ENCODE measurements at regions of chr1 and their contacts with region 1.

Region 1: DNA sequence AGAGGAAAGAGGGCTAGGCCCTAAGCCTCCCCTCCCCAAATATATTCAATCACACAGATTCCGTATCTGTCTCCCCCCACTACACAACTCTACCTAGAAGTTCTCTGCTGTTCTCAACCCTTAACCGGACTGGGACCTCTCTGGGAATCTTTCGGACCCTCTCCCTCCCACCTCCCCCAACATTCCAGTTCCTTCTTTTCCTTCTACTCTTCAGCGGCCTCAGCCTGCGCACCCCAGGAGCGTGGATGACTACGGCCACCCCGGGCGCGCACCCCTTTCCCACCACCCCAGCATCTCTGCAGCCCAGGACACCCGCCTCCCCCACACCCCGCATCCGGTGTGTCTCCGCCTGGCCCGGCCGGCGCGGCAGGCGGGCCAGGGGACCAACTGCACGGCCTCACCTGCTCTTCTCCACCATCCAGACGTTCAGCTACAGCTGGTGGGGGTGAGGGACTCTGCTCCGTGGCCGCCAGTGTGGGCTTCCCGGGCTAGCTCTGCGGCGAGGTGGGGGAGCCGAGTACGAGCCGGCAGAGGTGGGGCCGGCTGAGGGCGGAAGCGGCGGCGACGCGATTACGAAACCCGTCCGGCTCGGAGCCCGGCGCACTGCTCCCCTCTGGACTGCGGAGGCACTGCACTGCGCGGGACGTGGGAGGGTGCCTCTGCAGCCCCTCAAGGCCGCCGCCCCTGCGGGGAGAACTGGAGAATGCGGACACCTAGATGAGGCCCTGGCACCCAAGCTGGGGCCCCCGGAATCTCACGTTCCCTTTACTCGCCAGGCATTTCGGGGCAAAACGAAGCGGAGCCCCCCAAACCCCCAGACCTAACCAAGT is at the start of gene CDC42SE1:
- DNase-seq: peak; percentile 80 to 93 (median 89)
- ATAC-seq: peak; percentile 89
- H3K4me3 ChIP-seq: peak within 1 kb of the TSS; percentile 85
- H3K4me1 ChIP-seq: peaks cover 33% of the 10 kb centered on the region
- CTCF ChIP-seq: peak; percentile 90
- total RNA-seq, gene CDC42SE1: 69.2 to 78.5 (median 73.5) TPM

Region 2: GRCh38 chr1:151008190-151008860 is 51.0 kb before region 1 on chr1 and contains the start of gene PRUNE1:
- intact Hi-C with region 1: loop called in 1 of 2 experiments (anchors 10 kb)
- DNase-seq: peak; percentile 97 to 99 (median 97)
- ATAC-seq: peak; percentile 89
- H3K4me3 ChIP-seq: peak within 1 kb of the TSS; percentile 48
- H3K4me1 ChIP-seq: peaks cover 60% of the 10 kb centered on the region
- CTCF ChIP-seq: no peak
- total RNA-seq, gene PRUNE1: 21.3 to 27.5 (median 23.3) TPM

Region 3: GRCh38 chr1:151113877-151114276 is 54.6 kb after region 1 on chr1:
- intact Hi-C with region 1: no loop called
- DNase-seq: no peak
- ATAC-seq: no peak
- H3K4me3 ChIP-seq: no peak overlapping the region
- H3K4me1 ChIP-seq: no peaks in the 10 kb centered on the region
- CTCF ChIP-seq: no peak

Region 4: DNA sequence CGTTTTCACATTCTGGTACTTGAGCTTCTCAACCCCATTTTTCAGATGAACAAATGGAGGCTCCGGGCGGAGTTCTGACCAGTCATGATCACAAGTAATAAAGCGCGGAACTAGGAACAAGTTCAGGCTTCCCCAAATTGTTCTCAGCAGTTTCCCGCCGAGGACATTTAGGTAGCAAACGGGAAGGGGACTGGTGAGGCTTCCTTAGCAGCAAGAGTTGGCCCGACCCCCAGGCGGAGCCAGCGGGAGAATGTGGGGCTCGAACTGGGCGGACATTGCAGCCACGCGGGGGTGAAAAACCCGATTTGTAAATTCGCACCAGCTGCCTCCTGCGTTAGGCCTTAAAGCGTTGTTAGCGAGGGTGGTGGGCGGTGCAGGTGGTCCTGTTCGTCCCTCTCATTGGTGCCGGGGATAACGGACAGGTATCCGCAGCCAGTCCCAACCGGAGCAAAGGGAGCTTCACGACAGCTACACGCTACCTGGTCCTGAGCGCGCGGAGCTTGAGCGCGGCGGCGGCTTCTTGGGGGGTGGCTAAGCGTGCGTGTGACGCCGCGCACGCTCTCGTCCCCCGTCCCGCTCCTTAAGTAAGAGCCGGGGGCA is 71.8 kb after region 1 on chr1:
- intact Hi-C with region 1: no loop called
- DNase-seq: peak; percentile 85 to 87 (median 86)
- ATAC-seq: peak; percentile 93
- H3K4me3 ChIP-seq: no peak overlapping the region
- H3K4me1 ChIP-seq: no peaks in the 10 kb centered on the region
- CTCF ChIP-seq: no peak

Region 5: GRCh38 chr1:151336556-151336955 is 277.3 kb after region 1 on chr1:
- intact Hi-C with region 1: no loop called
- DNase-seq: no peak
- ATAC-seq: no peak
- H3K4me3 ChIP-seq: no peak overlapping the region
- H3K4me1 ChIP-seq: no peaks in the 10 kb centered on the region
- CTCF ChIP-seq: no peak

Measured in mucosa of descending colon (tissue), 3 donors.